Activated CD4-positive, alpha-beta memory T cell treated with anti-CD3 and anti-CD28 coated beads, Interleukin-2, amount 10 ng/mL, durations not matched to agents 7 days and 5 days (primary cell): ENCODE measurements at regions of chr12 and their contacts with region 1.

Region 1: GRCh38 chr12:3073438-3074250 is 3.5 kb upstream of the TSPAN9 start:
- DNase-seq: peak; percentile 85
- H3K4me3 Mint-ChIP-seq: no peak overlapping the region
- H3K27ac Mint-ChIP-seq: no peak overlapping the region
- H3K4me1 Mint-ChIP-seq: peaks cover 5% of the 10 kb centered on the region
- H3K27me3 Mint-ChIP-seq: peaks cover 28% of the 10 kb centered on the region

Region 2: DNA sequence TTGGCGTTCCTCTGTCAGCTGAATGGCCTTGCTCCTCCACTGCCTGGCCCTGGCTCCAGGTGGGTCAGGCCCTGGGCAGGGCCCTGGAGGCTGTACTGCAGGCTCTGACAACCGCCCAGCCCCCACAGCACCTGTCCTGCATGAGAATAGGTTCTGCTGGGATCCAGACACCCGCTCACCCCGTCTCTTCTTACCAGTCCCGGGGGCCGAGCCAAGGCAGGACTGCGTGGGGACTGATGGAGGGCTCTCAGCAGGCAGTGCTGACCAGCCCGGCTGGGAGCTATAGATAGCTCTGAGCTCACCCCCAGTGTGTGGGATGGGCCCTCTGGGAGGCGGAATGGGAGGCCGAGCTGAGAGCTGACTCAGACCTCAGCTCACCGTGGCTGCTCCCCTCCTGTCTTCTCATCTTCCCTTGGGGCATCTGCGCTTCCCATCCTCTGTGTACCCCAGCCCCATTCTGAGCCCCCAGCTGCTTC is 74.8 kb before region 1 on chr12:
- CTCF ChIA-PET with region 1: no interaction called
- POLR2A ChIA-PET with region 1: no interaction called
- DNase-seq: no peak
- H3K4me3 Mint-ChIP-seq: no peak overlapping the region
- H3K27ac Mint-ChIP-seq: no peak overlapping the region
- H3K4me1 Mint-ChIP-seq: no peaks in the 10 kb centered on the region
- H3K27me3 Mint-ChIP-seq: no peaks in the 10 kb centered on the region

Region 3: GRCh38 chr12:3014641-3015040 is 59.0 kb before region 1 on chr12:
- CTCF ChIA-PET with region 1: no interaction called
- POLR2A ChIA-PET with region 1: no interaction called
- DNase-seq: no peak
- H3K4me3 Mint-ChIP-seq: no peak overlapping the region
- H3K27ac Mint-ChIP-seq: no peak overlapping the region
- H3K4me1 Mint-ChIP-seq: peaks cover 7% of the 10 kb centered on the region
- H3K27me3 Mint-ChIP-seq: no peaks in the 10 kb centered on the region

Region 4: DNA sequence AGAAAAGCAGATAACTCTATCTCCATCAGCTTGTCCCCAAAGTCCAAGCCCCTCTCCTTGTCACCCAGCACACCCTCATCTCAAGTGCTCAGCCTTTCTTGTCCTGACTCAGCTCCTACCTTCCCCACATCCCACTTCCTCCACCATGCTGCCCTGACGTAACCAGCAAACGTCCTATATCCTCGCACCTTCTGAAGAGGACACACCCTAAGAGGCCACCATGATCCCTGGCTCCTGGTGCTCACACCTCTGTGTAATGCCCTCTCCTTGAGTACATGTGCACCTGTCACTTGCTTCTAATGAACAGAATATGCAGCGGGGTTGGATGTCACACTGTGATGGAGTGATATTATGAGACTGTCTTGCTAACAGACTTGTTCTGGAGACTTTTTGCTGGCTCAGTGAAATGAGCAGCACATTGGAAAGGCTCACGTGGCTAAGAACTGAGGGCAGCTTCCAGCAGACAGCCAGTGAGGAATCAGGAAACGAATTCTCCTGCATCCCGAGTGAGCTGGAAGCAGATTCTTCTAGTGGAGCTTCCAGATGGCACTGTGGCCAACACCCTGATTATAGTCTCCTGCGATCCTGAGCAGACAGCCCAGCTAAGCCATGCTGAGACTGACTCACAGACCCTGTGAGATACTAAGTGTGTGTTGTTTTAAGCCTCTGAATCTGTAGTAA is 12.7 kb before region 1 on chr12:
- CTCF ChIA-PET with region 1: interaction called, 13 read pairs
- POLR2A ChIA-PET with region 1: no interaction called
- DNase-seq: no peak
- H3K4me3 Mint-ChIP-seq: no peak overlapping the region
- H3K27ac Mint-ChIP-seq: no peak overlapping the region
- H3K4me1 Mint-ChIP-seq: peaks cover 9% of the 10 kb centered on the region
- H3K27me3 Mint-ChIP-seq: peaks cover 35% of the 10 kb centered on the region

Region 5: DNA sequence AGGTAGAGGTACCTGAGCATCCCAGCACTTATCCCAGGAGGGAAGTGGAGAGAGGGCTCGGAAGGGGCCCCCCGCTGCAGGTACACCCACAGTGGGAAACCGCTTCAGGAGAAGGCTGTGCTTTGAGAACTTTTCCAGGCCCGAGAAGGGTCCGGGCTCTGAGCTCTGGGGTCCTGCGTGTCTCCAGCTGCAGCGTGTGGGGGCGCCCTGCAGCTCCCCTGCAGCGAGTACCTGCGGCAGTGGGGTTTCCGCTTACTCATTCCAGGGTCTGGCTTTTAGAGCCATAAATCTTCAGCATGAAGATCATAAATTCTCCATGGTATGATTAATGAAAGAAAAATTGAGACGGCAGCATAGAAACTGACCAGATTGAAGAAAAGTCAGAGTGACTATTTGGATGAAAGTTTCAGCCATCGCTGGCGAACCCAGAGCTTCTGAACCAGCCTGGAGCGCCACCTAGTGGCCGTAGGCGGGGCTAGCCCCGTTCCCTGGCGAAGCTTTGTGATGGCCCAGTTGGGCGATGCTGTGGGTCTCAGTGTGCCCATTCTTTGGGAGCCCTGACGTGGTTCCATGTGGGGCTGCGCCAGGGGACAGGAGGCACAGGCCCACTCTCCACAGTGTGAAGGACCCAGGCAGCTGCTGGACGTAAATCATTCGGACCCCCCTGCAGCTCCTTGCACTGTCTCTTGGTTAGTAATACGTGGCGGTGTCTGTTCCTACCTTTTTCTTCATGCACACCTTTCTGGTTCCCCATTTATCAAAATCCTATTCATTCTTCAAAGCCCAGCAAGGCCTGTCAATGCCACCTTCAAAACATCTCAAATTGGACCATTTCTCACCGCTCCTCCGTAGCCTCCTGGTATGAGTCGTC is 201.8 kb after region 1 on chr12:
- CTCF ChIA-PET with region 1: interaction called, 29 read pairs
- POLR2A ChIA-PET with region 1: no interaction called
- DNase-seq: peak; percentile 71
- H3K4me3 Mint-ChIP-seq: no peak overlapping the region
- H3K27ac Mint-ChIP-seq: no peak overlapping the region
- H3K4me1 Mint-ChIP-seq: no peaks in the 10 kb centered on the region
- H3K27me3 Mint-ChIP-seq: peaks cover 1% of the 10 kb centered on the region